SK-N-SH (cell line): ENCODE measurements at regions of chr13 and their contacts with region 1.

Region 1: DNA sequence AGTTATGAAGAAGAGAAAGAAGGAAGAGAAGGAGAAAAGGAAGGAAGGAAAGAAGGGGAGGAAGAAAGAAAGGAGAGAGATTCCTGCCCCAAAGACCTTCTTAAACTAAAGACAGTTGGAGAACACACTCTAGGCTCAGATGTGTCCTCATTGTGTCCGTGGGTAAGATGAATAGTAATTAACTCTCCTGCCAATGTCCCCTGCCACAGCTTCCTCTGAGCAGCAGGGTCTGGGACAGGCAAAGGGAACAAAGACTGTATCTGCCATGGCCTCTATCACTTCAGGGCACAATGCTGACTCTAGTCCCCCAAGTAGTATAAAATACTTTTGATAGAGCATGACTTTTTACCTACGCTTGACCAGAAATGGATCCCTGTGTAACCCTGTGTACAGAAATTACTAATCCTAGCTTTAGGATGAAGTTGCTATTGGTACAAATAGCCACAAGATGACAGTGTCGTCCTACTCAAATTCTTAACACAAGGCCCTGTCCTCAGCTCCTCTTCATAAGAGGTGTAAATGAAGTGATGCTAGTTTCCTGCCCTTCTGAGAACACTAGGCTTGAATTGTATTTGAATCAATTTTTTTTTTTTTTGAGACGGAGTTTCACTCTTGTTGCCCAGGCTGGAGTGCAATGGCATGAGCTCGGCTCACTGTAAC is 186.2 kb upstream of the GPR12 start:
- DNase-seq: peak; percentile 48
- H3K4me3 ChIP-seq: no peak overlapping the region
- H3K27ac ChIP-seq: no peak overlapping the region
- H3K4me1 ChIP-seq: no peaks in the 10 kb centered on the region
- H3K27me3 ChIP-seq: no peaks in the 10 kb centered on the region
- CTCF ChIP-seq: peak; percentile 80
- EP300 ChIP-seq: no peak
- RAD21 ChIP-seq: peak; percentile 90

Region 2: GRCh38 chr13:26965952-26966700 is 19.3 kb after region 1 on chr13:
- CTCF ChIA-PET with region 1: interaction called, 13 read pairs
- POLR2A ChIA-PET with region 1: interaction called, 4 read pairs
- DNase-seq: no peak
- H3K4me3 ChIP-seq: no peak overlapping the region
- H3K27ac ChIP-seq: no peak overlapping the region
- H3K4me1 ChIP-seq: peaks cover 0 to 7% of the 10 kb centered on the region in 2 experiments; a peak in 1 of 4 replicates
- H3K27me3 ChIP-seq: no peaks in the 10 kb centered on the region
- CTCF ChIP-seq: no peak
- EP300 ChIP-seq: no peak
- RAD21 ChIP-seq: no peak

Region 3: DNA sequence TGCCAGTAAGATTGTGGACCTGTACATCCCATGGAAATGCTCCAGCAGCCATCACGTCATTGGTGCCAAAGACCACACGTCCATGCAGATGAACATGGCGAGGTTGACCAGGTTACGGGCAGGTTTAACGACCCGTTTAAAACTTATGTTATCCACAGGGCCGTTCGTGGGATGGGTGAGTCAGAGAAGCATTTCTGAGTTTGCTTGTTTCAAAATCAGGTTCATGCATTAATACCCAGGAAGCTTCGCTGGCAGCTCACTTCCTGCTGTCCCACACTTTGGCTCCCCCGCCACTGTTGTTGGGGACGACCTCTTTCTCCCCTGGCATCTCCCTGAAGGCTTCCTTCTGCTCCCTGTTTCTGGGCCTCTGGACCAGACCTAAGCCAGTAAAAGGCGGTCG is 30.7 kb after region 1 on chr13:
- CTCF ChIA-PET with region 1: interaction called, 17 read pairs
- POLR2A ChIA-PET with region 1: no interaction called
- DNase-seq: no peak
- H3K4me3 ChIP-seq: no peak overlapping the region
- H3K27ac ChIP-seq: no peak overlapping the region
- H3K4me1 ChIP-seq: no peaks in the 10 kb centered on the region
- H3K27me3 ChIP-seq: no peaks in the 10 kb centered on the region
- CTCF ChIP-seq: no peak
- EP300 ChIP-seq: no peak
- RAD21 ChIP-seq: no peak

Region 4: DNA sequence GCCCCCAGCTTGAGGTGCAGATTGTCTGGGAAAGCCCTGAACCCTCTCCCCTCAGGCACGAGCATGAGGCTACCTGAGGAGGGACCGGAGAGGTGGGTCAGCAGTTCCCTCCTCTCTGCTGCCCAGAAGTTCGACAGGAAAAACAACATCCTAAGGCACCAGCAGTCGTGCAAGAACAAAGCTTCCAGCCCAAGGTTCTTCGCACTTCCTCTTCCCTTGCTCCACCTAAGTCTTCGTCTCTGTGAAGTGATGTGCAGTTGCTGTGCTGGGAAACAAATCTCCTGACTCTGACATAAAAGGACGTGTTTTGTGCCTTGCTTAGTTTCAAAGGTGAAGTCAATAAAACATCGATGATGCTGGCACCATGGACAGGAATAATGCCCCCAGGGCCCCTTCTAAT is 51.5 kb after region 1 on chr13:
- CTCF ChIA-PET with region 1: no interaction called
- POLR2A ChIA-PET with region 1: no interaction called
- DNase-seq: no peak
- H3K4me3 ChIP-seq: no peak overlapping the region
- H3K27ac ChIP-seq: no peak overlapping the region
- H3K4me1 ChIP-seq: no peaks in the 10 kb centered on the region
- H3K27me3 ChIP-seq: no peaks in the 10 kb centered on the region
- CTCF ChIP-seq: no peak
- EP300 ChIP-seq: no peak
- RAD21 ChIP-seq: no peak

Region 5: DNA sequence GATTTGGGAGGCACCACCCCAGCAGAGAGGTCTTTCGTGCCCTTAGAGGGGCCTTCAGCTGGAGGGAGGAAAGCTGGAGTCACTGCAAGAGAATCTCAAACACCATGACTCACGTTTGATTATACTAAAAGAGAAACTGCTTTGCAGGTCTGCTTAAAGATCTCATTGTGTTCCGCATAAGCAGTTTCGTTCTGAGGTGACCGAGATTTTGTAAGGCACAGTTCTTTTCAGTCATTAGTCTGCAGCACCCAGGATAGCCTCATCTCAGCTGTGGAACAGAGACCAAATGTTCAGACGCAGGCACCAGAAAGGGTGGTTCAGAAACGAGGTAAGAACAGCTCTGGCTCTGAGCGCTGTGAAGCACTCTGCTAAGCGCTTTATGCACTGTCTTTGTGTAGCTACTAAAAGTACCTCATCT is 406.4 kb after region 1 on chr13:
- CTCF ChIA-PET with region 1: interaction called, 108 read pairs
- POLR2A ChIA-PET with region 1: no interaction called
- DNase-seq: no peak
- H3K4me3 ChIP-seq: peak overlapping the region in 1 of 2 experiments; percentile 48; a peak in 2 of 4 replicates
- H3K27ac ChIP-seq: no peak overlapping the region
- H3K4me1 ChIP-seq: no peaks in the 10 kb centered on the region
- H3K27me3 ChIP-seq: no peaks in the 10 kb centered on the region; the same call in 1 of the 2 replicates
- CTCF ChIP-seq: no peak
- EP300 ChIP-seq: no peak
- RAD21 ChIP-seq: no peak

Region 6: GRCh38 chr13:27792393-27793218 is 845.8 kb after region 1 on chr13 and contains the start of gene GSX1:
- CTCF ChIA-PET with region 1: no interaction called
- POLR2A ChIA-PET with region 1: no interaction called
- DNase-seq: no peak
- H3K4me3 ChIP-seq: peak within 1 kb of the TSS; percentile 30 to 55
- H3K27ac ChIP-seq: no peak within 1 kb of the TSS
- H3K4me1 ChIP-seq: peaks cover 0 to 6% of the 10 kb centered on the region in 2 experiments; a peak in 2 of 4 replicates
- H3K27me3 ChIP-seq: peaks cover 93% of the 10 kb centered on the region
- CTCF ChIP-seq: no peak
- EP300 ChIP-seq: no peak
- RAD21 ChIP-seq: no peak
- polyA plus RNA-seq, gene GSX1: not detected in 2 replicates

Region 7: GRCh38 chr13:28355822-28356371 is 1409.1 kb after region 1 on chr13:
- CTCF ChIA-PET with region 1: no interaction called
- POLR2A ChIA-PET with region 1: no interaction called
- DNase-seq: no peak
- H3K4me3 ChIP-seq: no peak overlapping the region
- H3K27ac ChIP-seq: no peak overlapping the region
- H3K4me1 ChIP-seq: no peaks in the 10 kb centered on the region
- H3K27me3 ChIP-seq: no peaks in the 10 kb centered on the region
- CTCF ChIP-seq: no peak
- EP300 ChIP-seq: no peak
- RAD21 ChIP-seq: no peak